Endothelial cell of umbilical vein (primary cell): ENCODE measurements at regions of chr5 and their contacts with region 1.

Region 1: DNA sequence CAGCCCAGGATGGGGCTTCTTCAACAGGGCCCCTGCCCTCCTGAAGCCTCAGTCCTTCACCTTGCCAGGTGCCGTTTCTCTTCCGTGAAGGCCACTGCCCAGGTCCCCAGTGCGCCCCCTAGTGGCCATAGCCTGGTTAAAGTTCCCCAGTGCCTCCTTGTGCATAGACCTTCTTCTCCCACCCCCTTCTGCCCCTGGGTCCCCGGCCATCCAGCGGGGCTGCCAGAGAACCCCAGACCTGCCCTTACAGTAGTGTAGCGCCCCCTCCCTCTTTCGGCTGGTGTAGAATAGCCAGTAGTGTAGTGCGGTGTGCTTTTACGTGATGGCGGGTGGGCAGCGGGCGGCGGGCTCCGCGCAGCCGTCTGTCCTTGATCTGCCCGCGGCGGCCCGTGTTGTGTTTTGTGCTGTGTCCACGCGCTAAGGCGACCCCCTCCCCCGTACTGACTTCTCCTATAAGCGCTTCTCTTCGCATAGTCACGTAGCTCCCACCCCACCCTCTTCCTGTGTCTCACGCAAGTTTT is 23.6 kb downstream of the PCDHGC5 start:
- DNase-seq: peak; percentile 76
- H3K4me3 ChIP-seq: peak overlapping the region; percentile 44 to 51 (median 49)
- H3K27ac ChIP-seq: peak overlapping the region; percentile 19
- H3K4me1 ChIP-seq: peaks cover 31% of the 10 kb centered on the region
- H3K27me3 ChIP-seq: no peaks in the 10 kb centered on the region
- CTCF ChIP-seq: peak; percentile 89 to 94
- POLR2A ChIP-seq: no peak

Region 2: DNA sequence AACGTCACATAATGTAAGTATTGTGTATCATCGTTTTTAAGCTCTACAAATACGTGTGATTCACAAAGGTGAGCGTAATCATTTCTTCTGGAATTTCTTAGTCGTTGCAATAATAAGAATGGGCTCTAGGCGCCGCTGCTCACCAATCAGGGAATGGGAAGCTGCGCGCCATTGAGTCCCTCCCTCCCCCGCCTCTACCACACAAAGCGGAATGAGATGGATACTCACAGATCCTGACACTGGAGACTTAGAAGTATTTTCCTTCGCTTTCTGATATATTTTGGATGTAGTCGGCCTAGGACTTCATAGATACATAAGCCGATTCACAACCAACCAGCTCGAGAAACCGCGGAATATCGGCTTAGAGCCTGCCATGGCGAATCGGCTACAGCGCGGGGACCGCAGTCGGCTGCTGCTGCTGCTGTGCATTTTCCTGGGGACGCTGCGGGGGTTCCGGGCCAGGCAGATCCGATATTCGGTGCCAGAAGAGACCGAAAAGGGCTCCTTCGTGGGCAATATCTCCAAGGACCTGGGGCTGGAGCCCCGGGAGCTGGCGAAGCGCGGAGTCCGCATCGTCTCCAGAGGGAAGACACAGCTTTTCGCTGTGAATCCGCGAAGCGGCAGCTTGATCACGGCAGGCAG is 91.5 kb before region 1 on chr5 and contains the start of gene PCDHGA11:
- CTCF ChIA-PET with region 1: interaction called, 22 read pairs
- POLR2A ChIA-PET with region 1: no interaction called
- dilution Hi-C with region 1: no loop called
- intact Hi-C with region 1: no loop called
- DNase-seq: peak; percentile 78
- H3K4me3 ChIP-seq: peak within 1 kb of the TSS; percentile 39 to 83 (median 66)
- H3K27ac ChIP-seq: no peak within 1 kb of the TSS
- H3K4me1 ChIP-seq: peaks cover 15% of the 10 kb centered on the region
- H3K27me3 ChIP-seq: peaks cover 40 to 84% of the 10 kb centered on the region in 2 experiments
- CTCF ChIP-seq: peak; percentile 53 to 71
- POLR2A ChIP-seq: no peak
- total RNA-seq, gene PCDHGA11: 10.3 and 11.5 TPM in 2 replicates

Region 3: DNA sequence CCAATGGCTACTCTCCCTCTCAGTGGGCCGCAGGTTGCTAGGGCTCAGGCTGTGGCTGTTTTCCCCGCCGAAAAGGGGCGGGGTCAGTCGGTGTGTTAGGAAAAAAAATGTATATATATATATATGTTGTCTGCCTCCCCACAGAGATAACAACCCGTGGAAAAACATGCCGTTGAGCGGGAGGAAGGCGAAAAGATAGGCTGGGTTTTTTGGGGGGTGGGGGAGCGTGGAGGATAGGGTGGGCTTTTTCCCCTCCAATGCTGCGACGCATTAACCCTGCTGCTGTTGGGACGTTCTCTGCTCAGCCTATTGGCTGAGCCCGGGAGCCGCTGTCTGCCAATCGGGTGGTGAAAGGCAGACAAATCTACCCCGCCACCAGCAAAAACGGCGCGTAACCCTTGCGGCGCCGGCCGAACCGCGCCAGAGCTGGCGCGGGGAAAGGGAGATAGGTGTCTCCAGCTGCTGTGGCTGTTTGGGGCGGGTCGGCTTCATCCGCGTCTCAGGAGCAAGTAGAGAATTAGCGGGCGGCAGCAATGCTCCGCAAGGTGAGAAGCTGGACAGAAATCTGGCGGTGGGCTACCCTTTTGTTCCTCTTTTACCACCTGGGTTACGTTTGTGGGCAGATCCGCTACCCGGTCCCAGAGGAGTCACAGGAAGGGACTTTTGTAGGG is 27.7 kb before region 1 on chr5 and contains the start of gene PCDHGC4:
- CTCF ChIA-PET with region 1: interaction called, 24 read pairs
- POLR2A ChIA-PET with region 1: no interaction called
- dilution Hi-C with region 1: no loop called
- intact Hi-C with region 1: loop called (anchors 2 kb)
- DNase-seq: peak; percentile 60
- H3K4me3 ChIP-seq: peak within 1 kb of the TSS in 2 of 3 experiments; percentile 19 to 46
- H3K27ac ChIP-seq: no peak within 1 kb of the TSS
- H3K4me1 ChIP-seq: peaks cover 10% of the 10 kb centered on the region
- H3K27me3 ChIP-seq: peaks cover 5 to 17% of the 10 kb centered on the region in 2 experiments
- CTCF ChIP-seq: no peak
- POLR2A ChIP-seq: no peak
- total RNA-seq, gene PCDHGC4: 0.90 and 2.1 TPM in 2 replicates

Region 4: GRCh38 chr5:141501761-141502160 is 10.7 kb before region 1 on chr5:
- CTCF ChIA-PET with region 1: interaction called, 11 read pairs
- POLR2A ChIA-PET with region 1: no interaction called
- dilution Hi-C with region 1: no loop called
- intact Hi-C with region 1: no loop called
- DNase-seq: no peak
- H3K4me3 ChIP-seq: no peak overlapping the region
- H3K27ac ChIP-seq: no peak overlapping the region
- H3K4me1 ChIP-seq: no peaks in the 10 kb centered on the region
- H3K27me3 ChIP-seq: no peaks in the 10 kb centered on the region
- CTCF ChIP-seq: no peak
- POLR2A ChIP-seq: no peak

Region 5: GRCh38 chr5:141534492-141535211 is 22.2 kb after region 1 on chr5:
- CTCF ChIA-PET with region 1: no interaction called
- POLR2A ChIA-PET with region 1: no interaction called
- dilution Hi-C with region 1: no loop called
- intact Hi-C with region 1: no loop called
- DNase-seq: no peak
- H3K4me3 ChIP-seq: no peak overlapping the region
- H3K27ac ChIP-seq: no peak overlapping the region
- H3K4me1 ChIP-seq: peaks cover 5% of the 10 kb centered on the region
- H3K27me3 ChIP-seq: no peaks in the 10 kb centered on the region
- CTCF ChIP-seq: no peak
- POLR2A ChIP-seq: no peak

Region 6: DNA sequence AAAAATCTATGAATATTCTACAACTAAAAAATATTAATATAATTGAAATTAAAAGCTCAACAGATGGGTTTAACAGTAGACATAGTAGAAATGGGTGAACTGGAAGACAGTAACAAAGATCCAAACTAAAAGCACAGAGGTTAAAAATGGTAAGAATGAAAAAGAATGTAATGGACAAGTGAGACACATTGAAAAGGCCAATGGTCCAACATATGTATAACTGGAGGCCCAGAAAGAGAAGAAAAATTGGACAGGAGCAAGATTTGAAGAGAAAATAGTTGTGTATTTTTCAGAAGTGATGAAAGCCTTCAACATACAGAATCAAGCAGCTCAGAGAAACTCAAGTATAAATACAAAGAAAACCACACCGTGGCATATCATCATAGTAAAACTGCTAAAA is 35.0 kb after region 1 on chr5:
- CTCF ChIA-PET with region 1: no interaction called
- POLR2A ChIA-PET with region 1: no interaction called
- dilution Hi-C with region 1: no loop called
- intact Hi-C with region 1: no loop called
- DNase-seq: no peak
- H3K4me3 ChIP-seq: no peak overlapping the region
- H3K27ac ChIP-seq: no peak overlapping the region
- H3K4me1 ChIP-seq: no peaks in the 10 kb centered on the region
- H3K27me3 ChIP-seq: no peaks in the 10 kb centered on the region
- CTCF ChIP-seq: no peak
- POLR2A ChIP-seq: no peak

Region 7: DNA sequence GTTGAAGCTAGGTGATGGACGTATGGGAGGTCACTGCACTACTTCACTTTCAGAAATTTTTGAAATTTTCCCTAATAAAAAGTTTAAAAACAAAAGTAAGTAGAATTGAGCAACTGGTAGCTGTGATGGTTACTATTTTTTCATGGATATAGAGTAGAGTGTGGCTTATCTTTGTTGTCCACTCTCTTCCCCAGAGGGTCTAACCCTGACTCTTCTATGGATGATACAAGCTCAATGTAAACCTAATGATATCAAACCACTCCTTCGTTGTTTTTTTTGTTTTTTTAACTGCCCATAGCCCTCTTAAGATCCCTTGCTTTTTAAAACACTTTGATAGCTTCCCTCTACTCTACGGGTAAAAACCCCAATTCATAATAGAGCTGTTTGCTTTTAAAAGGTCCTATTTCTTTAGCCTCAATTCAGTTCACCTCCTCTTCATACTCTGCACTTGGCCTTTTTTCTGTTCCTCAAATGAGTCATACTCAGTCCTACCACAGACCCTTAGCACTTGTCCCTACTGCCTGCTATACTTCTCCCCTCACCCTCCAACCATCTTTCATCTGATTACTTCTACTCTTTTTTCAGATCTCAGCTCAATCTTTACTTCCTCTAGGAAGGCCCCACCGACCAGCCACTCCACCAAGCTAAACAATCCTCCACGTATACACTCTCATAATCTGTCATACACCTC is 121.6 kb after region 1 on chr5:
- CTCF ChIA-PET with region 1: no interaction called
- POLR2A ChIA-PET with region 1: no interaction called
- dilution Hi-C with region 1: no loop called
- intact Hi-C with region 1: no loop called
- DNase-seq: no peak
- H3K4me3 ChIP-seq: no peak overlapping the region
- H3K27ac ChIP-seq: no peak overlapping the region
- H3K4me1 ChIP-seq: peaks cover 19% of the 10 kb centered on the region
- H3K27me3 ChIP-seq: no peaks in the 10 kb centered on the region
- CTCF ChIP-seq: no peak
- POLR2A ChIP-seq: no peak